ENCODE measurements at regions of chr22 and their contacts with region 1.

Region 1: DNA sequence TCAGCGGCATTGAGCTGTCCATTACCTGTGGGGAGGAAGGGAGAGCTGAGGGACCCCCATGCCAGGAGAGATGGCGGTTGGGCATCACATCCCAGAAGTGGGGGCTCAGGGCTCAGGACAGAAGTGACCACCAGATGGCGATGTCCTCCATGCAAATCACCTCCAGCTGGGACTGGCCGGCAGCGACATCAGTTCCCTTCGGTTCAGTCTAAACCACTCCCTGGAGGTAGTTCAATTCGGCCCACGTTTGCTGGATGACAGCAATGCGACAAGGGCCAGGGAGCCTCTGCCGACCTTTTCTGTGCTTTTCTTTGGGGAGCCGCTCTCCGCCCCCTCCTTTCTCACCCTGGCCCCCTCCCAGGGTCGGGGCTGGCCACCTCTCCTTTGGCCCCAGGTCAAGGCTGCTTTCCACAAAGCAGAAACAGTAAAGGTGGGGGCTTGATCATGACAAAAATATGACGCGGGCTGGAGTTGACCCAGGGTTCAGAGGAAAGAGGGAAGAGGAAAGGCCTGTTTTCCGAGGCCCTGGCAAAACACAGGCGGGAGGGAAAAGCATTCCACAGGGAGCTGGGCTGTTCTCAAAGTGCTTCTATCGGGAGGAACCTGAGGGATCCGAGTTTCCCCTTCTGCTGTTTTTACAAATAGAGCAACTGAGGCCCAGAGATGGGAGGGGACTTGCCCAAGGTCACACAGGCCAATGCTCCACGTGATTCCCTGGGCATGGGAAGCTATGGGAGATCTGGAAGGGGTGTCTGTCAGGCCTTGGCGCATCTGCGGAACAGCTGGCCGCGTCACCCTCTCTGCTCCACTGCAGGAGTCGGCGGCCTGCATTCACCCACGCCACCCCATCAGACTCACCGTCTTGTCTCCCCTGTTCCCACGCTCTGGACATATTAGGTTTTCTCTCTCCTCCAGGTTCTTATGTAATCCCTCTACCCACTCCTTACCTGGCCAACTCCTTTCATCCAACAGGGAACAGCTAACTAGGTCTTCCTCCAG is 54.7 kb downstream of the FBXO7 start:
- DNase-seq: peak; percentile 92
- ATAC-seq: peak; percentile 72

Region 2: GRCh38 chr22:32622004-32622743 is 92.9 kb after region 1 on chr22:
- intact Hi-C with region 1: loop called (anchors 5 kb)
- DNase-seq: peak; percentile 64
- ATAC-seq: peak; percentile 66

Region 3: DNA sequence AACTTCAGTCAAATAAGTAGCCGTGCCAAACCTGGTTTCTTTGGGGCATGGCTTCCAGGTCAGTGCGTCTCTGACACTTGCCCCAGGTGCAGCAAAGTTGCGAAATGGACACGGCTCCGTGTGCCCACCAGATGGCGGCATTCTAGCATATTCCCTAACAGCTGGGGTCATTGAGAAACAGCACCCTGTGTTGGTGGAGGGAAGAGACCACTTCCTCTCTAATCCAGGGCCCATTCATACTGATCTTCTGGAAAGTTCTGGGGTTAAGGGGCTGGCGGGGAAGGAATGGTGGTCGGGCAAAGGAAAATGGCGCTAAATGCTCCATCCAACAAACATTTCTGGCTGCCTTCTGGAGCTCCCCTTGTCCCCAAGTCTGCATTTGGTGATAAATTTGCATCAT is 131.0 kb after region 1 on chr22:
- intact Hi-C with region 1: loop called (anchors 5 kb)
- DNase-seq: peak; percentile 82
- ATAC-seq: peak; percentile 77

Region 4: GRCh38 chr22:32796865-32797573 is 267.7 kb after region 1 on chr22:
- intact Hi-C with region 1: loop called (anchors 2 kb)
- DNase-seq: peak; percentile 84
- ATAC-seq: peak; percentile 55

Region 5: DNA sequence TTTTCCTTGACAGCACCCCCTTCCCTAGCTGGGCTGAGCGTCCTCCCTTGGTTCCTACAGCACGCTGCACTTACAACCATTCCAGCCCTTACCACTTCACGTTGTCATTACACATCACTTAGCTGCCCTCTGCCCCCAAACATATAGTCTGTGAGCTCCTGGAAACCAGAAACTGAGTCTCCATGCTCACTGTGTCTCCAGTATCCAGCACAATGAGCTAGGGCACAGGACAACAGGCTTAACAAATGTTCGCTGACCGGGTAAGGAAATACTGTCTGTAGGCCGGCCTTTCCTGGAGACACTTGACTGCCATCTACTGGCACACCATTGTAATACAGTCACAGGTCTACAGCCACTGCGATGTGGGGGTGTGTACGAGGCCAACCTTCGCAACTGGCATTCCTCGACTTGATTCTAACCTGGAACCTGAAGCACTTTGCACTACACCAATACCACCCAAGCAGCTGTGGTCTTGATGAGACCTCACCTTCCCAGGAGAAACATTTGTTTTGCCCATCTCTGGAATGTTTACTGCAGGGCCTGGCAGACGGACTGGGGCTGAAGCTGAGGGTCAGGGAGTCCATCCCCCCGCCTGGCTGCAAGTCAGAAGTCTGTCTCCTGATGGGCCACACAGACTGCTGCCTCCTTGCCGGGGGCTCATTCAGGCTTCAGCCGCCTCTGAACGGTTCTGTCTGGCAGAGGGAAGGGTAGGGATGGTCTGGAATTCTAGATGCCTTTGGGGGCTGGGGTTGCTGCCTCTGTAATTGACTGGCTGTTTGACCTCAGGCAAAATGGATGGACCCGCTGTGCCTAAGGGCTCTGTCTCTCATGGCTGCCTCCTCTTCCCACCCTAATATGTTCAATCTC is 456.8 kb after region 1 on chr22:
- intact Hi-C with region 1: loop called (anchors 5 kb)
- DNase-seq: peak; percentile 52
- ATAC-seq: peak; percentile 97

Region 6: DNA sequence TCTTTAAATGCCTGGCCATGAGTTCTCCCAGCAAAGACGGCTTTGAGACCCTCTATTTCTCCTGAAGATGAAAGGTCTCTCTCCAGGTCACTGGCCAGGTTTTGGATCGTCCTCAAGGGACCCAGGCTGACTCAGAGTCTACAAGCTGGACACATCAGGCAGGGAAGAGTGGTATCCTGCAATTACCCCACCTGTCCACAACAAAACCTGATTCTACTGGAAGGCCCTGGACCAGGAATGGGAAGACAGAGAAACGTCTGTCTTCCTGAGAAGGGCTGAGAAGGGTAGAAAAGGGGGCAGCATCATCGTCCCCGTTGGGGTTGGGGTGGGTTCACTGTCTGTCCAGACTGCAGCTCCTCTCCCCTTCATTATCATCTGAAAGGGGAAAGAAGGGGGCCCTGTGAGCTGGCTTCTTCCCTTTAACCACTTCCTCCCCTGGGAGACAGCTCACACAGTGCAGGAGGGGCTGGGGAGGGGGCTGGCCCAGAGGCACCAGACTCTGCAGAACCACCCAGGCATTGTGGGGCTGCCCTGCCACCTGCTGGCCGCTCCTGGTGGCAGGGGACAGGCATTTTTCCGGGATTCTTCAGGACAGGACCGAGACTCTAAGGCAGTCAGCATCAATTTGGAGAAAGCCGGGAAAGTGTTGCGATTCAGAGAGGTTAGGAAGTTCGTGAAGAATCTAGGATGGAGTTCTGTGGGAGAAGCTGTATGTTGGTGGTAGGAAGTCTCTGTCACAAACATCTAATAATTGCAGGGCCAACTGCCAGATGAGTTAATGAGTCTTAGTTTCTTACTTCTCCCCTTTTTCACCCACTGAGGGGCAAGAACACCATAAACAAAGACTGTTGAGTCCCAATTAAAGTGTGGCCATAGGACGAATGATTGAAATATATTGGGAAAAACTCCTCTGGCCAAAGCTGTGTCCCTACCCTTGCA is 471.3 kb after region 1 on chr22:
- intact Hi-C with region 1: loop called (anchors 2 kb)
- DNase-seq: peak; percentile 77
- ATAC-seq: peak; percentile 79

Measured in Right ventricle myocardium superior (tissue), 1 donor.